Motor neuron (in vitro differentiated cells): ENCODE measurements at regions of chr4 and their contacts with region 1.

Region 1: GRCh38 chr4:80803337-80803736 is 227.2 kb upstream of the BMP3 start:
- ATAC-seq: no peak
- H3K4me3 ChIP-seq: no peak overlapping the region
- H3K27ac ChIP-seq: no peak overlapping the region
- H3K4me1 ChIP-seq: no peaks in the 10 kb centered on the region

Region 2: DNA sequence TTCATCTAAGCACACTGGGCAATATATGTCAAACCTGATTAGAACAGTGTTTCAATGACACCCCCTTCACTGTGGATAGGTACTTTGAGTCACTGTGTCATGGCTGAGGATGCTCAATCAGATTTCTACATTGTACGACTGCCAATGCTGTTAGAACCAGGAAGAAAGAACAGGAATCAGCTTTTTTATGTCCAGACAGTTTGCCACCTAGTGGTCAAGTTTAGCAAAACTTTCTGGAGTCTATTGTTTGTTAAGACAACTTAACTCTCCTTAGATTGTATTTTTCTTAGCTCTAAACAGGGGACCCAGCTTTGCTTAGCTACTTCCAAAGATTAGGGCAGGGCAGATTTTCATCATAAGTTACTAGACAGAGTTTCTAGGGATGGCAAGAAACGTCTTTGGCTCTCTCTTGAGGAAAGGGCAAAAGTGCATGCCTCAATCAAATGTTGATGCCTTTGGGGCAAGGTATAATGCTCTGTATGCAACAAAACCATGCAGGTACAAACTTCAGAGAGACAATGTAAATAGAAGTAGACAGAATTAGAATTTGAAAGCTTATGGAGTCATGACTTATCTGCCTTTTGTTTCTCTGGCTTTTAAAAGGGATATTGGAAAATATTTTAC is 186.7 kb after region 1 on chr4:
- in situ Hi-C with region 1: loop called in 1 of 9 experiments (anchors 25 kb)
- ATAC-seq: peak in 7 of 8 experiments; percentile 32 to 80 (median 63)
- H3K4me3 ChIP-seq: no peak overlapping the region
- H3K27ac ChIP-seq: no peak overlapping the region
- H3K4me1 ChIP-seq: peaks cover 0 to 2% of the 10 kb centered on the region in 2 donors